Heart left ventricle (tissue), 16 donors: ENCODE measurements at regions of chr1 and their contacts with region 1.

Region 1: DNA sequence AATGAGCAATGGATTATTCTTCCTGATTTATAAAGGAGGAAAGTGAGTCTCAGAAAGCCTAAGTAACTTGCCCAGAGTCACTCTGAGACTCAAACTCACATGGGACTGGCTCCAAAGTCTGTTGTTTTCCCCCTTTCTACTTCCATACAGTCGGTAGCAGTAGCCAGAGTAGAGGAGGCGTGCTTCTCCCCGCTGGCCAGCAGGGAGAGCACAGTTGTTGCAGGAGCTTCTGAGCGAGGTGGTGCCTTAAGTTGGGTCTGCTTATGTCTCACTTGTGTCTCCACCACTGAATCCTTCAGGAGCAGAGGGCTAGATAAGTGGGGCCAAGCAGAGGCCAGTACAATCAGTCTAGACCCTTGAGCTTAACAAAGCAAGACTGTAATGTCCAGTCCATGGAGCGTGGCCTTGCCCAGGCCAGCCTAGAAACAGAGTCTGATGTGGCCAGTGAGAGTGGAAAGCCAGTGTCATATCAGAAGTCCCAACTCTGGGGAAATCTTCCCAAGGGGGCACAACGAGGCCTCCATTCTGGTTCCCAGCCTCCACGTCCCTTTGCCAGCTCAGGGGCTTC is 181.9 kb downstream of the ZSCAN20 start:
- DNase-seq: no peak
- ATAC-seq: peak in 2 of 4 donors; percentile 17 to 31
- H3K4me3 ChIP-seq: no peak overlapping the region
- H3K27ac ChIP-seq: peak overlapping the region in 4 of 12 donors; percentile 4 to 62 (median 38)
- H3K4me1 ChIP-seq: peaks cover 0 to 18% (median 5%) of the 10 kb centered on the region in 12 donors
- H3K27me3 ChIP-seq: no peaks in the 10 kb centered on the region
- CTCF ChIP-seq: peak in 7 of 12 donors; percentile 12 to 46 (median 30)
- POLR2A ChIP-seq: no peak

Region 2: GRCh38 chr1:33709783-33710718 is 55.7 kb after region 1 on chr1:
- intact Hi-C with region 1: loop called in 1 of 10 experiments (anchors 5 kb)
- DNase-seq: no peak
- ATAC-seq: no peak
- H3K4me3 ChIP-seq: no peak overlapping the region
- H3K27ac ChIP-seq: no peak overlapping the region
- H3K4me1 ChIP-seq: no peaks in the 10 kb centered on the region
- H3K27me3 ChIP-seq: peaks cover 0 to 15% (median 4%) of the 10 kb centered on the region in 9 donors
- CTCF ChIP-seq: no peak
- POLR2A ChIP-seq: no peak